ENCODE measurements at regions of chr14 and their contacts with region 1.

Region 1: DNA sequence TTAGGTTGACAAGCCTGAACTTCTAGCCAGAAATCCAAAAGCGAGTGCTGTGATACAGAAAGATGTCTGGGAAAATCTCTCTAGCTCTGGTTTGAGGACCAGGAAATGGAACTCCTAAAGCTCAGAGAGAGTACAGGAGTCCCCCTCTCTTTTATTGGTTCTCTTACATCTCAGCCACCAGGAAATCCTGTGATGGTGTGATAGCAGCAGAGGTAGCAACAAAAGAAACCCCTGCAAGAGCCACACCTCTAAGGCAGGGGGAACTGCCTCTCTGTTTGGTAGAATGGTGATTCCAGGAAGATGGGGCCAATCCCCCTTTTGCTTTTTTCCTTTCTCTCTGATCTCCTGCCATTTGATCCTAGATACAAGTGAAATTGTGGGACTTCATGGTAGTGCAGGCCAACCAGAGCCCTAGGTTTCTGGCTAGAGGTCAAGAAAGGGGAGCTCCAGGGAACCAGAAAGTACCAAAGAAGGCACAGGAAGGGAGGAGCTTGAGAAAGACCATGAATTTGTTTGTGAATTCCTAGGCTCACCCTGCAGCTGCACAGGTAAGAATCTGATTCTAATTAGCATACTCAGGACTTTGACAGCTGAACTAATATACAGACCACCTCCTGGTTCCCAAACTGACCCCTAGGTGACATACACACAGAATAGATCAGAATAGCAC is 88.5 kb downstream of the PAPLN start:
- DNase-seq: no peak
- H3K4me3 ChIP-seq: no peak overlapping the region
- H3K4me3 Mint-ChIP-seq: no peak overlapping the region
- H3K27ac Mint-ChIP-seq: no peak overlapping the region
- H3K4me1 ChIP-seq: peaks cover 45% of the 10 kb centered on the region
- H3K4me1 Mint-ChIP-seq: peaks cover 30% of the 10 kb centered on the region
- H3K27me3 ChIP-seq: no peaks in the 10 kb centered on the region
- H3K27me3 Mint-ChIP-seq: no peaks in the 10 kb centered on the region
- CTCF ChIP-seq: no peak

Region 2: GRCh38 chr14:73211251-73212040 is 114.3 kb before region 1 on chr14:
- CTCF ChIA-PET with region 1: no interaction called
- POLR2A ChIA-PET with region 1: no interaction called
- intact Hi-C with region 1: no loop called
- DNase-seq: no peak
- H3K4me3 ChIP-seq: no peak overlapping the region
- H3K4me3 Mint-ChIP-seq: no peak overlapping the region
- H3K27ac Mint-ChIP-seq: no peak overlapping the region
- H3K4me1 ChIP-seq: no peaks in the 10 kb centered on the region
- H3K4me1 Mint-ChIP-seq: no peaks in the 10 kb centered on the region
- H3K27me3 ChIP-seq: no peaks in the 10 kb centered on the region
- H3K27me3 Mint-ChIP-seq: no peaks in the 10 kb centered on the region
- CTCF ChIP-seq: no peak

Region 3: DNA sequence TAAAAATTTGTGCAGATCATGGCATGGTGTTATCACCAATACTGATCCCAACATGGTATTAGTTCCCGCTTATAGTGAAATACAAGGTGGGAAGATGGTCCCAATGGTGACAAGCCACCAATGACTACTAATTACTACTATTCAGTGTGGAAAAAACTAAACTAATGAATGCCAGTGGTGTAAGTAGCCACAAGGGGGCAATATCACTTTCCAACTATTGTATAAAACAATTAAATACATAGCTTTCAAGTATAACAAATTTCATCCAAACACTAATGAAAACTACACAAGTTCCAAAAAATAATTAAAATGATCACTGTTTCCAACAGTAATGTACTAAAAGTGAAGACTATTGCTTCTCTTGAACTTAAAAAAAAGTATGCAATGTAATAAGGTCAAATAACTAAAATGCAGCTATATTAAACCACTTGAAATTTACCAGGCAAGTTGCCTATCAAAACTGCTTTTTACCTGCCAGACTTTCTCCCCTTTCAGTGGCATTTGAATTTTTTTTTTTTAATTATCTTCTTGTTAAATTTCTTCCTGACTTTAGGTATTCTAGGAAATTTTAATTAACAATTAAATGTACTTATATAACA is 30.5 kb before region 1 on chr14:
- CTCF ChIA-PET with region 1: interaction called, 5 read pairs
- POLR2A ChIA-PET with region 1: no interaction called
- intact Hi-C with region 1: loop called (anchors 1 kb)
- DNase-seq: peak in 1 of 2 experiments; percentile 37
- H3K4me3 ChIP-seq: no peak overlapping the region
- H3K4me3 Mint-ChIP-seq: no peak overlapping the region
- H3K27ac Mint-ChIP-seq: no peak overlapping the region
- H3K4me1 ChIP-seq: peaks cover 23% of the 10 kb centered on the region
- H3K4me1 Mint-ChIP-seq: peaks cover 6% of the 10 kb centered on the region
- H3K27me3 ChIP-seq: no peaks in the 10 kb centered on the region
- H3K27me3 Mint-ChIP-seq: no peaks in the 10 kb centered on the region
- CTCF ChIP-seq: peak; percentile 60 to 63

Region 4: GRCh38 chr14:73311708-73312030 is 14.1 kb before region 1 on chr14:
- CTCF ChIA-PET with region 1: no interaction called
- POLR2A ChIA-PET with region 1: interaction called, 3 read pairs
- intact Hi-C with region 1: loop called (anchors 1 kb)
- DNase-seq: no peak
- H3K4me3 ChIP-seq: no peak overlapping the region
- H3K4me3 Mint-ChIP-seq: no peak overlapping the region
- H3K27ac Mint-ChIP-seq: no peak overlapping the region
- H3K4me1 ChIP-seq: peaks cover 13% of the 10 kb centered on the region
- H3K4me1 Mint-ChIP-seq: peaks cover 6% of the 10 kb centered on the region
- H3K27me3 ChIP-seq: no peaks in the 10 kb centered on the region
- H3K27me3 Mint-ChIP-seq: no peaks in the 10 kb centered on the region
- CTCF ChIP-seq: no peak

Measured in Caco-2 (cell line).